ENCODE measurements at regions of chr4 and their contacts with region 1.

Region 1: DNA sequence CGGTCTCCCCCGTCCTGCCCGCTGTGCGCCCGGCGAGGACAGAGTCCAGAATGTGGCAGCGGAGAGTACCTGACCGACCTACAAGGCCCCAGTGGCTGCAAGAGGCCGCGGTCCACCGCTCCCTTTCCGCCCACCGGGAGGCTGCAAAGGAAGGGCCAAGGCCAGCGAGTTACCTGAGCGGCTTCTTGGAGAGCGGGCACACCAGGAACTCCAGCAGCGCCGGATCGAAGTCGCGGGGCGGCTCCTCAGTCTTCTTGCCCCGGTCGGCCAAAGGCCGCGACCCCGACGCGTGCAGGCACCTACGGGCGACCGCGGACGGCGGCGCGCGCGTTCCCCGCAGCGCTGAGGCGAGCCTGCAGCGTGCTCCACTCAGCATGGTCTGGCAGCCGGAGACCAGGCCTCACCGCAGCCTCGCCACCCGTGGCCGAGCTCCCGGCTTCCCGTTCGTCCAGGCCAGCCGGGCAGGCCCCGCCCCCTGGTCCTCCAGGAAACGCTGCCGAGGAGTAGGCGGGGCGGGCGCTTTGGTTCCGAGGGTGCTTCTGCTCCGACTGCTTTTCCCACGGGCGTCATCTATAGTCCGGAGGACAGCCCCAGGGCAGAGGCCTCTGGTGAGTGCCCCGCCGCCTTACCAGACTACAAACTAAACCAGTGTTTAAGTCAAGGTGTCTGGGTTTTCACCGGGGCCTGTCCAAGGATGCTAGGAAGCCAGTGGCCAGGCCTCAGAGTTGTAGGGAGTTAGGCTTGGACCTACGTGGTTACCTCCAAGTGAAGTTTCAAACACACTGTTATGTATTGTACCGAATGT is at the start of gene PYURF:
- DNase-seq: peak; percentile 44
- ATAC-seq: peak; percentile 88
- H3K4me3 ChIP-seq: peak within 1 kb of the TSS; percentile 71
- H3K27ac ChIP-seq: peak within 1 kb of the TSS; percentile 67
- H3K4me1 ChIP-seq: peaks cover 31% of the 10 kb centered on the region
- H3K27me3 ChIP-seq: no peaks in the 10 kb centered on the region
- CTCF ChIP-seq: no peak
- EP300 ChIP-seq: no peak
- POLR2A ChIP-seq: peak; percentile 93
- RAD21 ChIP-seq: no peak
- polyA plus RNA-seq, gene PYURF: 16.7 to 58.1 TPM

Region 2: GRCh38 chr4:88217169-88217568 is 306.4 kb before region 1 on chr4:
- CTCF ChIA-PET with region 1: interaction called, 172 read pairs
- POLR2A ChIA-PET with region 1: no interaction called
- RAD21 ChIA-PET with region 1: interaction called, 106 read pairs
- SMC1A ChIA-PET with region 1: interaction called, 112 read pairs
- in situ Hi-C with region 1: loop called (anchors 5 kb)
- intact Hi-C with region 1: no loop called
- DNase-seq: no peak
- ATAC-seq: no peak
- H3K4me3 ChIP-seq: no peak overlapping the region
- H3K27ac ChIP-seq: no peak overlapping the region
- H3K4me1 ChIP-seq: no peaks in the 10 kb centered on the region
- H3K27me3 ChIP-seq: no peaks in the 10 kb centered on the region
- CTCF ChIP-seq: no peak
- EP300 ChIP-seq: no peak
- POLR2A ChIP-seq: no peak
- RAD21 ChIP-seq: no peak

Region 3: DNA sequence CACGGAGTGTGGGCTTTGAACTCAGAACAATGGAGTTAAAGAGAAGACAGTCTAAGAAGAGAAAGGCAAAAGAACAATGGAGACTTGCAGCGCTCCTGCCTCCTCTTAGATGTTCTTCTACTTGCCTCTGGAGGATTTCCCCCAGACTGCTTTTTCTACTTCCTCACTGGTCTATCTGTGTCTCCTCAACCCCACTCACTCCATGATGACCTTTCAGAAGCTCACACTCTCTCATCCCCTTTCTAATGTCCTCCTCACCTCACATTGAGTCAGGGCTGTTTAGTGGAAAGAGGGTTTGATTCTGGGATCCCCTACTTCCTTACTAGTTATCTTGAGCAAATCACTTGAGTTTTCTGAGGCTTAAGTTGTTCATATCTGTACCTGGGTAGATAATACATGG is 157.1 kb before region 1 on chr4:
- CTCF ChIA-PET with region 1: interaction called, 149 read pairs
- POLR2A ChIA-PET with region 1: no interaction called
- RAD21 ChIA-PET with region 1: interaction called, 3 read pairs
- SMC1A ChIA-PET with region 1: interaction called, 109 read pairs
- in situ Hi-C with region 1: loop called (anchors 5 kb)
- intact Hi-C with region 1: no loop called
- DNase-seq: no peak
- ATAC-seq: peak; percentile 36
- H3K4me3 ChIP-seq: no peak overlapping the region
- H3K27ac ChIP-seq: no peak overlapping the region
- H3K4me1 ChIP-seq: no peaks in the 10 kb centered on the region
- H3K27me3 ChIP-seq: no peaks in the 10 kb centered on the region
- CTCF ChIP-seq: no peak
- EP300 ChIP-seq: no peak
- POLR2A ChIP-seq: no peak
- RAD21 ChIP-seq: no peak

Region 4: GRCh38 chr4:88439161-88439760 is 84.3 kb before region 1 on chr4:
- CTCF ChIA-PET with region 1: no interaction called
- POLR2A ChIA-PET with region 1: no interaction called
- RAD21 ChIA-PET with region 1: no interaction called
- SMC1A ChIA-PET with region 1: no interaction called
- in situ Hi-C with region 1: no loop called
- intact Hi-C with region 1: no loop called
- DNase-seq: no peak
- ATAC-seq: no peak
- H3K4me3 ChIP-seq: no peak overlapping the region
- H3K27ac ChIP-seq: no peak overlapping the region
- H3K4me1 ChIP-seq: no peaks in the 10 kb centered on the region
- H3K27me3 ChIP-seq: no peaks in the 10 kb centered on the region
- CTCF ChIP-seq: no peak
- EP300 ChIP-seq: no peak
- POLR2A ChIP-seq: no peak
- RAD21 ChIP-seq: no peak

Region 5: DNA sequence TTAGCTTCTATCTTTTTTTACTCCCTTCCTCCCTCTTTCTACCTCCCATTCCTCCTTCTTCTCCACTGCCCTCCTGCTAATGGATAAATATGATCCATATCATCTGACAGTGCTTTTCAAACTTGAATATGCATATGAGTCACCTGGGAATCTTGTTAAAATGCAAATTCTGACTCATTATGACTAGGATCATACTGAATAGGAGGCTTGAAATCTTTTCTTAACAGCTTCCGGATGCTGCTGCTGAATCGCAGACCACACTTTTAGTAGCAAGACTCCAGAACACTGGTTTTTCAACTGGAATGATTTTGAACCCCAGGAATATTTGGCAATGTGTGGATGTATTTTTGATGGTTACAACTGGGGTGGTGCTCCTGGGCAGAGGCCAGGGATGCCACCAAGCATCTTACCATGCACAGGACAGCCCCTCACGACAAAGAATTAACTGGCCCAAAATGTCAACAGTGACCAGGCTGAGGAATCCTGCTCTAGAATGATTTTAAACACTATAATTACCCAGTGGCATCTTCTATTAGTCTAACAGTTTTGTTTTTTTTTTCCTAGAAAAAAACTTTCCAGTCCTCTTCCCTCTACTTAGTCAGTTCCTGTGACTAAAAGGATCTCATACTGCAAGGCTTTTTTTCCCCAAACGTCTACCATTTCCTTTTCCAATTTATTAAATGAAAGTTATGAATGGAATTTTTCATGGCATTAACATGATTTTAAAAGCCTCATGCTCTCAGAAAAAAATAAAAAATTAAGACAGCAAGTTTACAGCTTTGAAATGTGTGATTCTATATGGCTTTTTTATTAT is 10.6 kb after region 1 on chr4:
- CTCF ChIA-PET with region 1: interaction called, 43 read pairs
- POLR2A ChIA-PET with region 1: no interaction called
- RAD21 ChIA-PET with region 1: interaction called, 9 read pairs
- SMC1A ChIA-PET with region 1: interaction called, 19 read pairs
- in situ Hi-C with region 1: no loop called
- intact Hi-C with region 1: no loop called
- DNase-seq: no peak
- ATAC-seq: no peak
- H3K4me3 ChIP-seq: no peak overlapping the region
- H3K27ac ChIP-seq: no peak overlapping the region
- H3K4me1 ChIP-seq: no peaks in the 10 kb centered on the region
- H3K27me3 ChIP-seq: no peaks in the 10 kb centered on the region
- CTCF ChIP-seq: no peak
- EP300 ChIP-seq: no peak
- POLR2A ChIP-seq: no peak
- RAD21 ChIP-seq: no peak

Region 6: GRCh38 chr4:88747361-88747760 is 223.8 kb after region 1 on chr4:
- CTCF ChIA-PET with region 1: no interaction called
- POLR2A ChIA-PET with region 1: no interaction called
- RAD21 ChIA-PET with region 1: no interaction called
- SMC1A ChIA-PET with region 1: no interaction called
- in situ Hi-C with region 1: no loop called
- intact Hi-C with region 1: no loop called
- DNase-seq: no peak
- ATAC-seq: no peak
- H3K4me3 ChIP-seq: no peak overlapping the region
- H3K27ac ChIP-seq: no peak overlapping the region
- H3K4me1 ChIP-seq: no peaks in the 10 kb centered on the region
- H3K27me3 ChIP-seq: no peaks in the 10 kb centered on the region
- CTCF ChIP-seq: no peak
- EP300 ChIP-seq: no peak
- POLR2A ChIP-seq: no peak
- RAD21 ChIP-seq: no peak

Region 7: GRCh38 chr4:89110986-89111832 is 587.7 kb after region 1 on chr4 and contains the start of gene TIGD2:
- CTCF ChIA-PET with region 1: no interaction called
- POLR2A ChIA-PET with region 1: no interaction called
- RAD21 ChIA-PET with region 1: no interaction called
- SMC1A ChIA-PET with region 1: no interaction called
- in situ Hi-C with region 1: no loop called
- intact Hi-C with region 1: loop called (anchors 10 kb)
- DNase-seq: peak; percentile 47
- ATAC-seq: peak; percentile 94
- H3K4me3 ChIP-seq: peak within 1 kb of the TSS; percentile 95
- H3K27ac ChIP-seq: peak within 1 kb of the TSS; percentile 47
- H3K4me1 ChIP-seq: 0 out of 2 replicates have a peak, but pooled peaks cover 3% of the 10 kb centered on the region
- H3K27me3 ChIP-seq: no peaks in the 10 kb centered on the region
- CTCF ChIP-seq: peak; percentile 66 to 83 (median 75)
- EP300 ChIP-seq: no peak
- POLR2A ChIP-seq: peak; percentile 98
- RAD21 ChIP-seq: peak; percentile 60
- polyA plus RNA-seq, gene TIGD2: 2.4 to 3.6 TPM

Measured in GM12878 (cell line).